Stomach (tissue), 19 donors: ENCODE measurements at regions of chr20 and their contacts with region 1.

Region 1: GRCh38 chr20:8722276-8722928 is 346.5 kb upstream of the PLCB4 start:
- DNase-seq: peak in 1 of 2 donors; percentile 84
- H3K4me3 ChIP-seq: no peak overlapping the region
- H3K27ac ChIP-seq: no peak overlapping the region
- H3K4me1 ChIP-seq: peaks cover 0 to 9% (median 3%) of the 10 kb centered on the region in 4 donors
- H3K27me3 ChIP-seq: no peaks in the 10 kb centered on the region
- CTCF ChIP-seq: peak in 5 of 7 experiments; percentile 57 to 85 (median 65)
- EP300 ChIP-seq: no peak
- POLR2A ChIP-seq: no peak

Region 2: GRCh38 chr20:7935027-7935551 is 787.3 kb before region 1 on chr20:
- intact Hi-C with region 1: loop called (anchors 5 kb)
- DNase-seq: no peak
- H3K4me3 ChIP-seq: no peak overlapping the region
- H3K27ac ChIP-seq: no peak overlapping the region
- H3K4me1 ChIP-seq: peaks cover 0 to 19% (median 9%) of the 10 kb centered on the region in 4 donors
- H3K27me3 ChIP-seq: no peaks in the 10 kb centered on the region
- CTCF ChIP-seq: no peak
- EP300 ChIP-seq: no peak
- POLR2A ChIP-seq: no peak

Region 3: DNA sequence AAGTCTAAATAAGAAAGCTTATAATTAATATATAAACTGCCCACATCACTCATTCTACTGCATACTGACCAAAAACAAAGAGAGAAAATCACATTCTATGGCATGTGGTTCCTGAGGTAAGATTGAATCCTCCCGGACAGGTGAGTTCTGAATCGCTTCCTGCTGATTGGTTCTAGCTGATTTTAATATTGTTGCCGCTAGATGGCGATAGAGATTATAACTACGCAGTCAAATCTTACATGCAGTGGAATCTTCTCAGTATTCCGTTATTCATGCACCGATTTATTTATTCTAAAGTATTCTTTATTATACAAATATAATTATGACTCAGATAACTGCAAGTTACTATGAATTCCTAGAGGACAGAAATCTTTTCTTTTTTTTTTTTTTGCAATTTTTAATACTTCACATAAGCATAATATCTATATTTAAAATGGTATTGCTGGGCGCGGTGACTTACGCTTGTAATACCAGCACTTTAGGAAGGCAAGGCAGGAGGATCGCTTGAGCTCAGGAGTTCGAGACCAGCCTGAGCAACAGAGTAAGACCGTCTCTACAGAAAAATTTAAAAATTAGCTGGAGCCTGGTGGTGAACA is 678.6 kb before region 1 on chr20:
- intact Hi-C with region 1: loop called (anchors 10 kb)
- DNase-seq: peak in 1 of 2 donors; percentile 84
- H3K4me3 ChIP-seq: no peak overlapping the region
- H3K27ac ChIP-seq: no peak overlapping the region
- H3K4me1 ChIP-seq: peaks cover 0 to 5% (median 1%) of the 10 kb centered on the region in 4 donors
- H3K27me3 ChIP-seq: no peaks in the 10 kb centered on the region
- CTCF ChIP-seq: peak in 5 of 7 experiments; percentile 35 to 85 (median 65)
- EP300 ChIP-seq: no peak
- POLR2A ChIP-seq: no peak

Region 4: DNA sequence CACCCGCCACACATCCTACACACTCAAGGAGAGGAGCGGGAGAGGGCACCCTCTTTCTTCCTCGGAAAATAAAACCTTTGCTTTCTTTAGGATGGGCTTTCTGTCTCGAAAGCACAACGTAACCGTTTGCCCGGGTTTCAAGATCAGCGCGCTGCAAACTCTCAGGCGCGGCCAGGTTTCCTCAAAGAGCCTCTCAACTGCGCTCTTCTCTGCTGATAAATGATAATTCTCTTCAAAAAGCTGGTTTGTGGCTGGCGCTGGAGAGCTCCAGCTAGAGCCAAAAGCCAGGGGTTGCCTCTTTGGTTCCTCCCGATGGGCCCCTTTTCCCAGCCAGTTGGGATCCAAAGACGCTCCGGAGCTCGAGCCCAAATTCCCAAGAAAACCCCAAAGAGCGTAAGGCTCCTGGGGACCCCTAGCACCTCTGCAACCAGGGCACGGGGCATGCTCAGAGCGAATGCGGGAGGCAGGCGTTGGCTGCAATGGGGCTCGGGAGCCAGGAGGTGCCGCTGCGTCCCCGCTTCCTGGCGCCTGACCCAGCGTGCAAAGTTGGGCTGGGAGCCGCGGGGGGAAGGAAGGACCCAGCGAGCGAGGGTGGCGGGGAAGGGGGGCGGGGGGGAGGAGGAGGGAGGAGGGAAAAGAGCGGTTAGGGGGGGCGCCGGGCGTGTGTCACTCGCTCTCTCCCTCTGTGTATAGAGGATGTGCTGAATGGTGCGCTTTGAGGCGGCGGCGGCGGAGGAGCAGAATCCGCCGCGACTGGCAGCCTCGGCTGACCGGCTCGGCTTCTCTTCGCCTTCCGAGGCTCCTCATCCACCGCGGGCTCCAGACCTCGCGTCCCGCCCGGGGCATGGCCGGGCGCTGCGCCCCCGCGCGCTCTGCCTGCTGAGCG is 590.6 kb before region 1 on chr20 and contains the start of gene PLCB1:
- intact Hi-C with region 1: loop called (anchors 10 kb)
- DNase-seq: peak; percentile 87 to 95
- H3K4me3 ChIP-seq: peak within 1 kb of the TSS; percentile 82 to 93 (median 88)
- H3K27ac ChIP-seq: peak within 1 kb of the TSS; percentile 74 to 91 (median 85)
- H3K4me1 ChIP-seq: peaks cover 8 to 41% (median 27%) of the 10 kb centered on the region in 4 donors
- H3K27me3 ChIP-seq: no peaks in the 10 kb centered on the region
- CTCF ChIP-seq: peak in 5 of 7 experiments; percentile 74 to 92 (median 84)
- EP300 ChIP-seq: no peak
- POLR2A ChIP-seq: no peak
- total RNA-seq, gene PLCB1: 5.8 to 66.5 (median 21.6) TPM

Region 5: DNA sequence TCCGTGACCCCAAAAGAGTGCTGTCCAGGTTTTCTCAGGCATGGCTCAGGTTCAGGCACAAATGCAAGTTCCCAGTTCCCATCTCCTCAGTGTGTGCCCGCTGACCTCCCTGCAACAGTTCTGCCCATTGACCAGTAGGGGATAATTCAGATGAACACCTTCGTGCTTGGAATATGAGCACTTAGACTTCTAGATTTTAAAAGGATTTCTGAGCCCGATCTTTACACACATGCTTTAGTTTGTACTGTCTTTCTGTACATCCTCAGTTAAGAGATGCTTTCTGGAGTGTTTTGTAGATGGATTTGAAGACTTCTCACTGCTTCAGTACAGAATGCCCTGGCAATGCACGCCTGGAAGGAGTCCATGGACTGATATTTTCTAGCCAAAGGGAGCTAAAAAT is 106.9 kb after region 1 on chr20:
- intact Hi-C with region 1: no loop called
- DNase-seq: no peak
- H3K4me3 ChIP-seq: no peak overlapping the region
- H3K27ac ChIP-seq: no peak overlapping the region
- H3K4me1 ChIP-seq: no peaks in the 10 kb centered on the region
- H3K27me3 ChIP-seq: no peaks in the 10 kb centered on the region
- CTCF ChIP-seq: no peak
- EP300 ChIP-seq: no peak
- POLR2A ChIP-seq: no peak